Calu3 (cell line): ENCODE measurements at regions of chr9 and their contacts with region 1.

Region 1: DNA sequence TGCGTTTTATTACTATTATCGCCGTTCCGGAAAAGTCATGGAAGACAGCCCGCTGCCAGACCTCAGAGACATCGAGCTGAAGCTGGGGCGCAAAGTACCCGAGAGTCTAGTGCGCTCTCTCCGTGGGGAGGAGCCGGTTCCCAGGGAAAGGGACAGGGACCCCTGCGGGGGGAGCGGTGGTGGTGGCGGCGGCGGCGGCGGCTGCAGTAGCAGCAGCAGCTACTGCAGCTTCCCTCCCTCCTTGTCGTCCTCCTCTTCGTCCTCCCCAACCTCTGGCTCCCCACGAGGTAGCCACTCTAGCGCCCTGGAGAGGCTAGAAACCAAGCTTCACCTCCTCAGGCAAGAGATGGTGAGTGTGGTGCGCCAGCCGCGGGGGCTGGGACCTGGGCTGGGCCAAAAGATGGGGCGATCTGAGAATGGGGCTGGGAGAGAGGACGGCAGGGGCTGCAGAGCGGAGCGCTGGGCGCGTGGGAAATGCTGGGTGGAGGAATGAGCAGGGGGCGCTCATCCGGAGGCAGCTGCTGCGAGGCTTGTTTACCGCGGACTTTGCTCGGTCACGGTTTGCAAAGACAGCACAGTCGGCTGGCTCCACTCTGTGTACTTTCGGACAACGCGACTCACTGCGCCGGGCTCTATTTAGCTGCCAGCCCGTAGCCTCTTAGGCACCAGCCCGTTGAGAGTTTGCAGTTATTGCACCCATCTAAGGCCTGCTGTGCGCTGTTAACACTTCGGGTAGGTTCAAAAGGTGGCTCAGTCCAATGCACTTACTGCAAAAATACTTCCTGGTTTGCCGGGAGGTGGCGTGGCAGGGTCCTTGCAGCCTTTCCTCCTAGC is 1.1 kb downstream of the LURAP1L start:
- DNase-seq: peak; percentile 83
- H3K4me3 Mint-ChIP-seq: peak overlapping the region; percentile 99
- H3K27ac Mint-ChIP-seq: peak overlapping the region; percentile 91
- H3K4me1 Mint-ChIP-seq: peaks cover 20% of the 10 kb centered on the region
- H3K27me3 Mint-ChIP-seq: no peaks in the 10 kb centered on the region
- CTCF ChIP-seq: peak; percentile 12

Region 2: DNA sequence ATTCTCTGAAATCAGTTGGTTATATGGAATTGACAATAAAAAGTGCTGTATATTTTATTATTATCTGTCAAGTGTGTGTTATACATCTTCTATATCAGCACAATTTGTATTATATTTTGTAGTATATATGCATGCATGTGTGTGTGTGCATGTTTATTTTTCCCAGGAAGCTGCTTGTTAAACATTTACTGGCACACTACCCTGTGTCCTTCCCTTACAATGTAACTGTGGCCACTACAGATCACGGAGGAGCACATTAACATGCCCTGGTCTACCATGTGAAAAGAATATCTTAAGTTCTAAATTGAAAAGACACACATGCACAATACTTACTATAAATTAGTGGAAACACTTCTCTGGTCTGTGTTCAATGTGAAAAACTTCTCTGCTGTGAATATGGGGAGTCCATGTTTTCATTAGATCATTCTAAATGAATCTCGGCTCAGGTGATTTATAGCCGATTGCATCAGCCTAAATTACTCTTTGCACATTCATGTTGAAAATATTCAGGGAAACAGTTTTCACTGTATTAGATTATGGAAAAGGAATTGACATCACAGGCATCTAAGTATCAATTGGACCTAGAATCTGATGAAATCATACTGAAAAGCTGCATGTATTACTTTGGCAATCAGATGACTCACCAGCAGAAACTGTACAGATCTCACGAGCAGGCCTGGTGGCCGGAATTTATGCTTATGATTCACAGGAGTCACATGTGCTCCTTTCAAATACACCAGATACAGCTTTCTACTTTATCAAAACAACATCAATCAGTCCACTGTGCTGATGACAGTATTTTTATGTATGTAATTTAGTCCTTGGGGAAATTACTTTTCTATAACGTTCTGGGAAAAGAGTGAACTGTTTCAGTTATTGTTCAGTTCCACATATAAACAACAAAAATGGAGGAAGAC is 38.3 kb after region 1 on chr9:
- CTCF ChIA-PET with region 1: interaction called, 32 read pairs
- intact Hi-C with region 1: loop called (anchors 1 kb)
- DNase-seq: peak; percentile 65
- H3K4me3 Mint-ChIP-seq: peak overlapping the region; percentile 67
- H3K27ac Mint-ChIP-seq: peak overlapping the region; percentile 100
- H3K4me1 Mint-ChIP-seq: peaks cover 66% of the 10 kb centered on the region
- H3K27me3 Mint-ChIP-seq: no peaks in the 10 kb centered on the region
- CTCF ChIP-seq: no peak

Region 3: DNA sequence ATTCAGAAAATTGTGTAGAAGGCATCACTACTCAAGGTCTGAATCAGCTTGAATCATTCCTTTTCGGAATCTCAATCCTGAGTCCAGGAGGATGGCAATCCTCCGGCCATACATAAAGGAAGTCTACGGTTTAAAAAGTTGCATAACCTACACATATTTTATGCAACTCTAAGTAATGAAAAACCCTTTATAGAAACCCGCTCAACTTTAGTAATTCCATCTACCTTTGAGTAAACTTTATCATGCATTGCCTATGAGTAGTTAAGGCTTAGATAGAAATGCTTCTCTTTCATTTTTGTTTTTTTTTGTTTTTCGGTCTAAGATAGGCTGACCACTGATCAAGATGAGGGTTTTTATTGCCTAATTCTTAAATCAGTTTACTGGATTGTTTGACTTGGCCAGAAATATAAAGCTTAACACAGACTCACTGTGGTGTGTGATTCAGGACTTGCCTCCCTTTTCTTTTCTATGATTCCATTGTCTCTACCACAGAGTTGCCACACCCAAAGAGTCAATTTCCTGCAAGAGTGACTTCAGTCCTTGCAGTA is 83.9 kb after region 1 on chr9:
- CTCF ChIA-PET with region 1: no interaction called
- intact Hi-C with region 1: loop called (anchors 5 kb)
- DNase-seq: peak; percentile 50
- H3K4me3 Mint-ChIP-seq: peak overlapping the region; percentile 58
- H3K27ac Mint-ChIP-seq: peak overlapping the region; percentile 97
- H3K4me1 Mint-ChIP-seq: peaks cover 53% of the 10 kb centered on the region
- H3K27me3 Mint-ChIP-seq: no peaks in the 10 kb centered on the region
- CTCF ChIP-seq: no peak

Region 4: DNA sequence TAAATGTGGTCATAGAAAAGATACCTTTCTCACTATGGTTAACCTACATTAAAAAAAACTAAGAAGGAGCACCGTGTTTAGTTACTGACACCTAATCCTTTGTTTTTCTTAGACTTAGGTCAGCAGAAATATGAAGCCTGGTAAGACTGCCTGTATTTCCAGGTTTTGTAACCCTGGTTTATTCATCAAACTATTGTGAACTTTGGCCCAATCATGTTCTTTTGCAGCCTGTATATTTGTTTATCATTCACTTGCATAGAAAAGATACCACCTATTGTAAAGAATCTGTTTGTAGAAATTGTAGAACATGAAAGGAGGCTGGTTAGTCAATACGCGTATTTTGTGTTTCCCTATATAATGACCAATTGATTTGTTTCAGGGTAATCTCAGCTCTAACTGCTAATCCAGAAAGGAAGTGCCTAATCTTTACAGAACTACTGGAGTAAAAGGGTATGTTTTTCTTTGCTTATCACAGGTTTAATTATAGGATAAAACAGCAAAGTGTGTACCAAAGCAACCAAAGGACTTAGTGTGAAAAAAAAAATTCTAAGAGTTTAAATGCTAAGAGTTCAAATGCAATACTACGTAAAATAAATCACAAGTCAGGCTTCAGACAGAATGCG is 102.6 kb after region 1 on chr9:
- CTCF ChIA-PET with region 1: no interaction called
- intact Hi-C with region 1: loop called (anchors 2 kb)
- DNase-seq: no peak
- H3K4me3 Mint-ChIP-seq: peak overlapping the region; percentile 40
- H3K27ac Mint-ChIP-seq: peak overlapping the region; percentile 92
- H3K4me1 Mint-ChIP-seq: peaks cover 44% of the 10 kb centered on the region
- H3K27me3 Mint-ChIP-seq: no peaks in the 10 kb centered on the region
- CTCF ChIP-seq: no peak